ENCODE measurements at regions of chr2 and their contacts with region 1.

Region 1: GRCh38 chr2:109690822-109691547 is 76.8 kb downstream of the SOWAHC start:
- DNase-seq: no peak
- H3K4me3 ChIP-seq: no peak overlapping the region
- H3K27ac ChIP-seq: no peak overlapping the region
- H3K4me1 ChIP-seq: peaks cover 11% of the 10 kb centered on the region
- H3K27me3 ChIP-seq: no peaks in the 10 kb centered on the region
- CTCF ChIP-seq: no peak

Region 2: GRCh38 chr2:109644576-109645275 is 46.3 kb before region 1 on chr2:
- CTCF ChIA-PET with region 1: no interaction called
- dilution Hi-C with region 1: loop called (anchors 10 kb)
- in situ Hi-C with region 1: no loop called
- intact Hi-C with region 1: no loop called
- DNase-seq: no peak
- H3K4me3 ChIP-seq: no peak overlapping the region
- H3K27ac ChIP-seq: no peak overlapping the region
- H3K4me1 ChIP-seq: peaks cover 7% of the 10 kb centered on the region
- H3K27me3 ChIP-seq: no peaks in the 10 kb centered on the region
- CTCF ChIP-seq: no peak